A549 (cell line): ENCODE measurements at regions of chr11 and their contacts with region 1.

Region 1: DNA sequence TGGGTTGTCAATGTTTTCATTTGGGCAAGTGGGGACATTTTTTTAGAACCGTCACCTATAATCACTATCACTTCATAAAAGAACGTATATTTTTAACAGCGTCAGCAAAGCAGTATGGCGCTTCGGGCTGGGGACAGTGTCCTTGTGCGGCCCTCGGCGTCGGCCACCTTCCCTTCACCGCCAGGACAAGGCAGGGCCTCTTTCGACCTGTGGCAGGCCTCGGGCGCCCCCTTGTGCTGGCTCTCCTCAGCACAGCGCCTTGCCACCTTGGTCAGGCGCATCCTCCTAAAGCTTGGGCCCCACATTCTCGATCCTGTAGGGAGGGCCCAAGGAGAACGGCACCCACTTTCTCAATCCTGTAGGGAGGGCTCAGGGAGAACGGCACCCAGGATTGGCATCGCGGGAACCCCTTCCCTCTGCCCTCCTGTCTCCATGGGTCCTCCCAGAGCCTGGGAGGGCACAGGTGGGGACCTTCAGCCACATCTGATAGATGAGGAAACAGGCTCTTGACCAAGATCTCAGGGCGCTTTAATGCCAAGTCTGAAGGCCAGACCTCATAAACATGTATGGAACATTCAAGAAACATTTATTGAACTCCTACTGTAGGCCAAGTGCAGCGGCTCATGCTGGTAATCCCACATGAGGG is 11.5 kb upstream of the FADD start:
- DNase-seq: peak; percentile 74 to 79
- ATAC-seq: peak; percentile 92 to 95
- H3K4me3 ChIP-seq: no peak overlapping the region
- H3K27ac ChIP-seq: no peak overlapping the region
- H3K4me1 ChIP-seq: no peaks in the 10 kb centered on the region
- CTCF ChIP-seq: peak; percentile 91
- EP300 ChIP-seq: no peak
- POLR2A ChIP-seq: no peak
- RAD21 ChIP-seq: peak; percentile 96 to 99

Region 2: DNA sequence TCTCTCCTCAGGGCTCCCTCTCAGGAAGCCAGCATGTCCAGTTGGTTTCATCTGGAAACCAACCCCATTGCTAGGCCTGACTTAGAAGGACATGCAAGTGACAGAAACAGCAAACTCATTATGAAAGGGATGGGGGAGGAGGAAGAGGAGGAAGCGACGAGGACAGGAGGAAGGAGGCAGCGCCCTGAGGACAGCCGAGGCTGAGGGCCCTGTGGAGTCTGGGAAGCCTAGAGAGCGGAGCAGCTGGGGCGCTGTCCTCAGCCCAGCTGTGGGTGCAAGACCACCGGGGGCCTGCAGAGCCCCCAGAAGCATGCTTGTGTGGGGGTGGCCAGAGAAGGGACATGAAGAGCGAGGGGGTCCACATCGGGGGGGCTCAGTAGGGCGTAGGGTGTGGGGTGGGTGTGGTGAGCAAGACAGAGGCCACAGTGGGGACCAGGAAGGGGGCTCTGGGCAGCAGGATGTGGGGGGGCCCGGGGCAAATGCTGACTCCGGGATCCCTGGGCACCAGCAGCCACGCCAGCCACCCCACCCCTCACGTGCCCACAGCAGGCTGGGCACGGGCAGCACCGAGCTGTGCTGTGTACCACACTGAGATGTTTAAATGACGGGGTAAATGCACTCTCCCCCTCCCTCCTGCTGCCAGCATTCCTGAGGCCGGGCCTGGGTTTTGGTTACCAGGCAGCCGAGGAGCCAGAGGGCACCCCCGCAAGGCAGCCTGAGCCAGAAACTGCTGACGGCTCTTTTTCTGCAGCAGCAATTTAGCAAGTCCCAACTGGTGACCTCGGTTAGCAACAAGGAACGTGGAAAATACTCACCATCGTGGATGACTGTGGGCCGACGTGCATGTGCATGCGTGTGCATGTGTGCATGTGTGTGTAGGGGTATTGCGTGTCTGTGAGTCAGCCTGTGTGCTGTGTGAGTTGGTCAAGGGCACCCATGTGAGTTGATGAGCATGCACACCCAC is 792.8 kb before region 1 on chr11:
- CTCF ChIA-PET with region 1: no interaction called
- POLR2A ChIA-PET with region 1: no interaction called
- DNase-seq: no peak
- ATAC-seq: no peak
- H3K4me3 ChIP-seq: no peak overlapping the region
- H3K27ac ChIP-seq: no peak overlapping the region
- H3K4me1 ChIP-seq: peaks cover 5% of the 10 kb centered on the region
- CTCF ChIP-seq: no peak
- EP300 ChIP-seq: no peak
- POLR2A ChIP-seq: no peak
- RAD21 ChIP-seq: no peak

Region 3: DNA sequence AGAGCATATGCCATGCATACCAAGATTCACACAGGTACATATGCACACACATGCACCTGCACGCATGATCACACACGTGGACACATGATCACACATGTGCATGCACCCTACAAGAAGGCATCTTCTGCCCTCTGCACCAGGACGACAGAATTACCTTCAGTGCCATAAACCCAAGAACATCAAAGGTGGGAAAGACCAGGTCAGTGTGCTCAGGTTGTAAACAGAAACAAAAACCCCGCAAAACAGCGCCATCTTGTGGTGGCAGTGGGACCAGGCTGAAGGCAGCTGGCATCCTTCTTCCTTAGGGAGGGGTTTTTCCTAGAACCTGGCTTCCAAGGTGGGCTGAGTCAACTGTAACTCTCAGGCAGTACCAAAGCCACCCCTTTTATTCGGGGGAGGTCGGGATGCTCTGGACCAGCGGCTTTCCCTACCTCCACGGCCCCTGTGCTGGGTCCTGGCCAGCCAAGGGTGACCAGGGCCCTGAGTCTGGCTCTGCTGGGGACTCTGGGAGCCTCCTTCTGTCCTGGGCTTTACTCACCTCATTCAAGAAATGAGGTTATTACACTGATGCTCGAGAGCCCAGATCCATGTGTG is 303.0 kb before region 1 on chr11:
- CTCF ChIA-PET with region 1: interaction called, 10 read pairs
- POLR2A ChIA-PET with region 1: no interaction called
- DNase-seq: peak; percentile 68 to 86
- ATAC-seq: peak; percentile 79 to 87
- H3K4me3 ChIP-seq: no peak overlapping the region
- H3K27ac ChIP-seq: no peak overlapping the region
- H3K4me1 ChIP-seq: no peaks in the 10 kb centered on the region
- CTCF ChIP-seq: peak; percentile 93
- EP300 ChIP-seq: no peak
- POLR2A ChIP-seq: no peak
- RAD21 ChIP-seq: peak; percentile 73 to 82

Region 4: DNA sequence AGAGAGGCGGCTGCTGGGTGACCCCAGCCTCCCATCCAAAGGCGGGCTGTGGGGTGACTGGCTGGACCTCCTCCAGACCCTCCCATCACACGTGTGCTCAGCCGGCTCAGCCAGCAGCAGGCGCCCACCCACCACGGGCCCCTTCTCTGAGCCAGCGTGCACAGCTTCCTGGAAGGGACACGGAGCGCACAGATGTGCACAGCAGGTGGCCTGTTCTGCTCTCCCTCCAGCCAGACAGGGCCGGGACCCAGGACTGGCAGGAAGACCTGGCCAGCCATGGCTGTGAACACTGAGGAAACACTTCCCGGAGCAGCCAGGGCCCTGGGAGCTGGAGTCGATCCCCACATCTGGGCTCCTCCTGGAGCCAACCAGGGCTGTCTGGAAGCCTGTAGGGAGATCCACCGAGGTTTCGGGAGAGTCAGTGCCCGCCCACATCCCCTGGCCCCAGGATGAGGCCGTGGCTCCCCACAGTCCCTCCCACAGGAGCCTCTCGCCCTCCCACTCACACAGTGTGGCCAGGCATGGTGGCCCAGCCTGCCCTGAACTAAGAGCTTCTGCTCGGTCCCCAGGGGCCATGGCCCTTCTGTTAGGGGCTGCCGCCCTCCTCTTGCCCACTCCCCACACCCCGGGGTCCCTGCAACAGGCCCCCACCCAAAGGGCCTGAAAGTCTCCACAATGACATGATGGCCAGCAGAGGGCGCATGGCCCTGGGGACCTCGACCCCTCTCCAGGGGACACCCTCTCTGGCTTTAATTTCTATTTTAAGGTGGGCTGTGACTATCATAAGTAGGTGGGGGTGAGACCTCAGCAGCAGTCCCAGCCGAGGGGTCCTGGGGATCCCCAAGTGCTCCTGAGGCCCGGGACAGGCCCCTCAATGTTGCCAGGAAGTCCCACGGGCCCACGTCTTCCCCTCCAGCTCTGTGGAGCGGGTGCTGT is 281.8 kb before region 1 on chr11:
- CTCF ChIA-PET with region 1: interaction called, 233 read pairs
- POLR2A ChIA-PET with region 1: no interaction called
- DNase-seq: no peak
- ATAC-seq: peak in 1 of 2 experiments; percentile 68; a peak in 3 of 6 replicates
- H3K4me3 ChIP-seq: no peak overlapping the region
- H3K27ac ChIP-seq: peak overlapping the region in 1 of 2 experiments; percentile 23; a peak in 1 of 6 replicates
- H3K4me1 ChIP-seq: peaks cover 20% of the 10 kb centered on the region
- CTCF ChIP-seq: peak; percentile 84
- EP300 ChIP-seq: no peak
- POLR2A ChIP-seq: no peak
- RAD21 ChIP-seq: peak; percentile 32; a peak in 3 of 5 replicates

Region 5: DNA sequence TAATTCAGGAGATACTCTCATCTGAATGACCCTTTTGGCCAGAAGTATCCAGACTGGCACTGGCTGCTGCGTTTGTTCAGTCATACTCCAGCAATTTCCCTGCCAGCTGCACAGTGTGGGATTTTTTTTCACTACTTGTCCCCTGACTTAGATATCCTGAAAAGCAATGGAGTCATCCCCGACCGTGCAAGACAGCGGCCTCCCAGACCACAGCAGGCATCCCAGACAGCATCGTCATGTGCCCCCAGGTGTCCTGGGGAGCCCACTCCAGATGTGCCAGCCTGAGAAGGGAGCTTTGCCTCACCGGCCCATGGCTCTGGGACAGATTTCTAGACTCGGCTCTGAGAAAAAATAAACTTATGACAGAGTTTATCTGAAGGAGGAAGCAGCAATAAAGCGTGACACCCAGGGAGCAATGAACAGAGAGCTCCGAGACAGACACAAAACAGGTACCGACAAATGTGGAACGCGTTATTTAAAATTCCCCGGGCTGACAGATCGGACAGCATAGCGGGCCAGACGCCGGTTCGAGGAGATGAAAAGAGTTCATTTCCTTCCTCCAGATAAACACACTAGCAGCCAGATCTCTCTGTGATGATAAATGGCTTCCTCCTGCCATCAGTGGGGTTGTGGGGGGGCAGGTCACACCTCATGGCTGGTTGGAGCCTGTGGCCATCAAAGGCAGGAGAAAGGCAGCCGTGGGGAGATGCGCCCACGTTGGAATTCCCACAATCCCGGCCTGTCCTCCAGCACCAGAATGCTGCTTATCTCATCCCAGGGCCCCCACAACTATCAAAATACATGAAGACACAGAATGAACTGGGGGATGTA is 266.0 kb before region 1 on chr11:
- CTCF ChIA-PET with region 1: interaction called, 127 read pairs
- POLR2A ChIA-PET with region 1: no interaction called
- DNase-seq: no peak
- ATAC-seq: no peak
- H3K4me3 ChIP-seq: no peak overlapping the region
- H3K27ac ChIP-seq: no peak overlapping the region
- H3K4me1 ChIP-seq: no peaks in the 10 kb centered on the region
- CTCF ChIP-seq: no peak
- EP300 ChIP-seq: no peak
- POLR2A ChIP-seq: no peak
- RAD21 ChIP-seq: no peak

Region 6: DNA sequence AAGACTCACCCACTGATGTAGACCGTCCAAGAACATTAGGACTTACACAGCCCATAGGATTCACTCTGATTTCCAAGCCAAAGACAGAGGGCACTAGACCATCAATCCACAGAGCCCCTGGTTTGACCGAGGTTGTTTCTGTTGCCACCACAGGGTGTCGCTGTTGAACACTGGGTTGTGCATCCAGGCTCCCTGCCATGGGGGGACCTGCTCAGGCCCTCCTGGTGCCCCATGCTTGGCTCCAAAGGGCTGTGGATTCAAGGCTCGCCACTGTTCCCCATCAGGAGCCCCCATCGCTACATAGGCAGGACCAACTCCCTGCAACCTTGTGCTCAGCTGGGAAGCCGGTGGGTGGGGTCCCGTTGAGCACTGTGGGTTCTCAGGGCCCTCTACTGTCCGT is 241.5 kb before region 1 on chr11:
- CTCF ChIA-PET with region 1: interaction called, 19 read pairs
- POLR2A ChIA-PET with region 1: no interaction called
- DNase-seq: peak; percentile 52 to 68
- ATAC-seq: peak in 1 of 2 experiments; percentile 21; a peak in 3 of 6 replicates
- H3K4me3 ChIP-seq: no peak overlapping the region
- H3K27ac ChIP-seq: peak overlapping the region; percentile 88 to 93
- H3K4me1 ChIP-seq: peaks cover 29% of the 10 kb centered on the region
- CTCF ChIP-seq: peak; percentile 38
- EP300 ChIP-seq: no peak
- POLR2A ChIP-seq: no peak
- RAD21 ChIP-seq: peak in 1 of 2 experiments; percentile 47; a peak in 2 of 5 replicates

Region 7: DNA sequence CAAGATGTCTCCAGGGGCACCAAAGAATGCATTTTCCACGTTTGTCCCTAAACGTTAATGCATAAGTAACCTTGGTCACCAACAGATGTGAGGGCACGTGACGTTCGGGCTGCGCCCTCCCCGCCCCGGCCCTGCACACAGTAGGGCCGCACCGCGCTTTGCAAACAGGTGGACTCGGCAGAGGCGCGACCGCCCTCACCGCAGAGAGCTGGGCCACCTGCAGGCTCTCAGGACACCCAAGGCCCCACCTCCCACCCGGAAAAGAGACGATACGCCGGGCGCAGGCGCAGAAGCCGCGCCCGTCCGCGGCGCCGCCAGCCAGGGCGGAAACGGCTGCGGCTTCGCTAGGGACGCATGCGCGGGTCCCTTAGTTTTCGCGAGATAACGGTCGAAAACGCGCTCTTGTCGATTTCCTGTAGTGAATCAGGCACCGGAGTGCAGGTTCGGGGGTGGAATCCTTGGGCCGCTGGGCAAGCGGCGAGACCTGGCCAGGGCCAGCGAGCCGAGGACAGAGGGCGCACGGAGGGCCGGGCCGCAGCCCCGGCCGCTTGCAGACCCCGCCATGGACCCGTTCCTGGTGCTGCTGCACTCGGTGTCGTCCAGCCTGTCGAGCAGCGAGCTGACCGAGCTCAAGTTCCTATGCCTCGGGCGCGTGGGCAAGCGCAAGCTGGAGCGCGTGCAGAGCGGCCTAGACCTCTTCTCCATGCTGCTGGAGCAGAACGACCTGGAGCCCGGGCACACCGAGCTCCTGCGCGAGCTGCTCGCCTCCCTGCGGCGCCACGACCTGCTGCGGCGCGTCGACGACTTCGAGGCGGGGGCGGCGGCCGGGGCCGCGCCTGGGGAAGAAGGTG is 11.5 kb after region 1 on chr11 and contains the start of gene FADD:
- CTCF ChIA-PET with region 1: interaction called, 15 read pairs
- POLR2A ChIA-PET with region 1: no interaction called
- DNase-seq: peak; percentile 84 to 93
- ATAC-seq: peak; percentile 82 to 89
- H3K4me3 ChIP-seq: peak within 1 kb of the TSS; percentile 96
- H3K27ac ChIP-seq: peak within 1 kb of the TSS; percentile 97
- H3K4me1 ChIP-seq: peaks cover 28% of the 10 kb centered on the region
- CTCF ChIP-seq: no peak
- EP300 ChIP-seq: no peak
- POLR2A ChIP-seq: peak; percentile 75
- RAD21 ChIP-seq: no peak
- polyA plus RNA-seq, gene FADD: 30.2 and 34.7 TPM in 2 replicates

Region 8: DNA sequence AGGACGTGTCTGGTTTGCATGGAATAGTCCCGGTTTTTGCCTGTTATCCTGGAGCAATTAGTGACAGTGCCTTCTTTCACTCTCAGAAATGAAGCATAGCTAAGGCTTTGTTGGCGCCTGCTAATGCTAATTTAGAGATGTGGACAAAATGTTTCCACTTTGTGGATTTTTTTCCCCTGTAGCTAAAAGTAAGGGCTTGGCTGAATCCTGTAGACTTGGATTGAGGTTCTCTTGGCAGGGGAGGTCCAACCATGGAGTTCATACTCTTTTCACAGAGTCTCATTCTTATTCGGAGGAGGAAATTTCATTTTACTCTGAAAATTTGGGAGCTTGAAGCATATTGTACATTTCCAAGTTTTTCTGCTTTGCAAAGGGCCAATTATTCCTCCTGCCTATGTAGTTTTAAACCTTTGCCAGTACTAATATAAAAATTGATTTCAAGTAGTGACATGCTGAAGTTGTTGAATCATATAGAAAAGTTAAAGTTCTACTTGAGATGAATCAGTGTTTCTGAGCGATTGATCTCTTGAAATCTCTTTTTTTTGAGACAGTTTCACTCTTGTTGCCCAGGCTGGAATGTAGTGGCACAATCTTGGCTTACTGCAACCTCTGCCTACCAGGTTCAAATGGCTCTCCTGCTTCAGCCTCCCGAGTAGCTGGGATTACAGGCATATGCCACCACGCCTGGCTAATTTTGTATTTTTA is 98.9 kb after region 1 on chr11:
- CTCF ChIA-PET with region 1: no interaction called
- POLR2A ChIA-PET with region 1: no interaction called
- DNase-seq: no peak
- ATAC-seq: no peak
- H3K4me3 ChIP-seq: no peak overlapping the region
- H3K27ac ChIP-seq: no peak overlapping the region
- H3K4me1 ChIP-seq: no peaks in the 10 kb centered on the region
- CTCF ChIP-seq: no peak
- EP300 ChIP-seq: no peak
- POLR2A ChIP-seq: no peak
- RAD21 ChIP-seq: no peak